Posterior vena cava (tissue), 2 donors: ENCODE measurements at regions of chr3 and their contacts with region 1.

Region 1: GRCh38 chr3:57837686-57838085 is 81.6 kb downstream of the SLMAP start:
- DNase-seq: no peak

Region 2: DNA sequence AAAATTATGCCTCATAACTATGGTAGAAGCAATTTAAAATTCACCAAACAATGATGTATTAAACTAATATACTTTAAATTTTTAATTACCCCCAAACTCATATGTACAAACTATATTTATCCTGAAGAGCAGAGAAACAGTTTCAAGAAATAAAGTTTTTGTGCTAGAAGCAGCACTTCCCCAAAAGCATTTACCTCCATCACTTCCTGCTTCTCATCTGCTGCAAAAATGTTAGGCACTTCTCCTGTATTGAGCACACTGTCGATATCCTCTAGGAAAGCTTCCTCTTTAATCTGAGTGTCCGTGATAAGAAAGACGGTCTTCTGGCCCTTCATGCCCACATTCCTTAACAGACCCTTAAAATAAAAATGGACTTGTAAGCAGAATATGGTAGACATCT is 443.7 kb before region 1 on chr3:
- intact Hi-C with region 1: loop called in 1 of 2 experiments (anchors 5 kb)
- DNase-seq: no peak